GM18951 (cell line): ENCODE measurements at regions of chr12 and their contacts with region 1.

Region 1: DNA sequence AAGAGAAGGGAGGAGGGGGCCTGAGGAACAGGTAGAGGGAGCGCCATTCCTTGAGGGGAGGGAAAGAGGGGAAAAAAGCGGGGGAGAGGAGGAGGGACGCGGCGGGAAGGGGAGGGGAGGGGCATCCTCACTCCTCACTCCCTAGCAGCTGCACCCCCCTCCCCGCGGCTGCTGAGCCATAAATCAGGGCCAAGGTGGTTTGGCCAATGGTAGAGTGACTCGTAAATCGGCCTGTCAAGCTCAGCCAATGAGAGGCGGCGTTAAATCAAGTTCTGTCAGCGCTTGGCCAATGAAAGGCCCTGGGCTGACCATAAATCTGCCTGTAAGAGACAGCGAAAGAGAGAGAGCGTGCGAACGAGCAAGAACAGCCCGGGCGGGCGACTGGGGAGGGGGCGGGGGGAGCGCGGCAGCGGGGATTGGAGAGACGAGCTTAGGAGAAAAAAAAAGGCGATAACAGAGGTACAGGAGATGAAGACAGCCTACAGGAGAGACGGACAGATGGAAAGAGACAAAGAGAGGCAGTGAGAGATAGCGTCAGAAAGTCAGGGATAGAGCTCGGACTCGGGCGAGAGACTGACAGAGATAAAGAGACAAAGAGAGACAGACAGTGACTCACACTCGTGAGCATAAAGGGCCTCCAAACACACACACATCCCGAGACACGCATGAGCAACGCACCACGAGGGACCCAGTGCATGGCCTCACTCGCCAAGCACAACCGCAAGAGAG is 5.1 kb downstream of the GPR84 start:
- POLR2A ChIP-seq: peak; percentile 28

Region 2: DNA sequence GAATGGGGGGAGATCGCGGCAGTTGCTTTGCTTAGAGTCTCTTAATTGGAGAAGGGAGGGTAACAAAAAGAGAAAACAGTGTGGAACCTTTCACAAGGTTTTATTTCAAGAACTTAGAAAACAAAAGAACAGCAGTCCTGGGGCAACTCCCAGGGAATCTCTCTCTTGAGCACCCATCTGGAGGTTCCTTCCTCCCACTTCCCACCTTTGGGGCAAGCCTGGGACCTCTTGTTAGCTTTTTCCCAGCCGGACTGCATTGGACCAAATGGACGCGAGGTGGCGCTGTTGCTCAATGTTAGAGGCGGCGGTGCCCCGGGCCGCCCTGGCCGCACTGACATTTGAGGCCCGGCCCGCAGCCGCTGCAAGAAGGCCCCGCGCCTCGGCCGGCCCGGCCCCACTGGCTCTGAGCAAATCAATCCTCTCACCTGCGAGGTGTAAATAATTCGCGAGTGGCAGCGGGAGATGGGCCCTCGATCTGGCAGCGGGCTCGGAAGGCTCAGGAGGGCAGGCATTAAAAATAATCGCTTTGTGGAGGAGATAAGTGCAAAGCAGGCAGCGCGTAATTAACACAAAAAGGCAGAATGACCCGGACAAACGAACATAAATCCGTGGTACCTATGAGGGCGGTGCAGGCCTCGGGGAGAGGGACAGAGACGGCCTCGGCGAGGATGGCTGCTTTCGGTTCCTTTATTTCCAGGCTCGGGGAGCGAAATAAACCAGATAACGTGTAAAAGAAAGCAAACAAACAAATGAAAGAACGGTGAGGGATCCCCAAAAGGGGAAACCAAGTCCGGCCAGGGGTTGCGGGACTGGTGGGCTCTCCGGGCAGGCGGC is 353.1 kb before region 1 on chr12:
- in situ Hi-C with region 1: loop called (anchors 25 kb)
- POLR2A ChIP-seq: no peak